Natural killer cell (primary cell): ENCODE measurements at regions of chr7 and their contacts with region 1.

Region 1: GRCh38 chr7:105808703-105809590 is 67.5 kb downstream of the ATXN7L1 start:
- DNase-seq: peak; percentile 62 to 85
- ATAC-seq: peak; percentile 81 to 94 (median 92)
- H3K4me3 ChIP-seq: no peak overlapping the region
- H3K4me3 Mint-ChIP-seq: peak overlapping the region; percentile 79
- H3K27ac ChIP-seq: peak overlapping the region; percentile 78
- H3K27ac Mint-ChIP-seq: peak overlapping the region; percentile 94 to 98
- H3K4me1 ChIP-seq: peaks cover 46% of the 10 kb centered on the region
- H3K4me1 Mint-ChIP-seq: peaks cover 62 to 76% of the 10 kb centered on the region in 2 donors
- H3K27me3 ChIP-seq: no peaks in the 10 kb centered on the region
- H3K27me3 Mint-ChIP-seq: no peaks in the 10 kb centered on the region
- CTCF ChIP-seq: no peak

Region 2: GRCh38 chr7:105678811-105679495 is 130.0 kb before region 1 on chr7:
- intact Hi-C with region 1: loop called (anchors 10 kb)
- DNase-seq: peak in 1 of 2 donors; percentile 44
- ATAC-seq: peak in 1 of 3 donors; percentile 37
- H3K4me3 ChIP-seq: peak overlapping the region; percentile 29
- H3K4me3 Mint-ChIP-seq: peak overlapping the region; percentile 72
- H3K27ac ChIP-seq: peak overlapping the region; percentile 66
- H3K27ac Mint-ChIP-seq: peak overlapping the region; percentile 84 to 88
- H3K4me1 ChIP-seq: peaks cover 40% of the 10 kb centered on the region
- H3K4me1 Mint-ChIP-seq: peaks cover 45 to 55% of the 10 kb centered on the region in 2 donors
- H3K27me3 ChIP-seq: no peaks in the 10 kb centered on the region
- H3K27me3 Mint-ChIP-seq: no peaks in the 10 kb centered on the region
- CTCF ChIP-seq: no peak

Region 3: GRCh38 chr7:105691733-105692564 is 117.0 kb before region 1 on chr7:
- intact Hi-C with region 1: loop called (anchors 5 kb)
- DNase-seq: peak; percentile 57 to 91
- ATAC-seq: peak; percentile 81 to 87 (median 84)
- H3K4me3 ChIP-seq: peak overlapping the region; percentile 64
- H3K4me3 Mint-ChIP-seq: peak overlapping the region; percentile 100
- H3K27ac ChIP-seq: peak overlapping the region; percentile 81
- H3K27ac Mint-ChIP-seq: peak overlapping the region; percentile 89 to 95
- H3K4me1 ChIP-seq: peaks cover 30% of the 10 kb centered on the region
- H3K4me1 Mint-ChIP-seq: peaks cover 27 to 33% of the 10 kb centered on the region in 2 donors
- H3K27me3 ChIP-seq: no peaks in the 10 kb centered on the region
- H3K27me3 Mint-ChIP-seq: peaks cover 0 to 2% of the 10 kb centered on the region in 2 donors
- CTCF ChIP-seq: no peak

Region 4: GRCh38 chr7:105826143-105826542 is 17.2 kb after region 1 on chr7:
- intact Hi-C with region 1: no loop called
- DNase-seq: no peak
- ATAC-seq: no peak
- H3K4me3 ChIP-seq: no peak overlapping the region
- H3K4me3 Mint-ChIP-seq: no peak overlapping the region
- H3K27ac ChIP-seq: no peak overlapping the region
- H3K27ac Mint-ChIP-seq: no peak overlapping the region
- H3K4me1 ChIP-seq: no peaks in the 10 kb centered on the region
- H3K4me1 Mint-ChIP-seq: peaks cover 38 to 43% of the 10 kb centered on the region in 2 donors
- H3K27me3 ChIP-seq: no peaks in the 10 kb centered on the region
- H3K27me3 Mint-ChIP-seq: no peaks in the 10 kb centered on the region
- CTCF ChIP-seq: no peak

Region 5: DNA sequence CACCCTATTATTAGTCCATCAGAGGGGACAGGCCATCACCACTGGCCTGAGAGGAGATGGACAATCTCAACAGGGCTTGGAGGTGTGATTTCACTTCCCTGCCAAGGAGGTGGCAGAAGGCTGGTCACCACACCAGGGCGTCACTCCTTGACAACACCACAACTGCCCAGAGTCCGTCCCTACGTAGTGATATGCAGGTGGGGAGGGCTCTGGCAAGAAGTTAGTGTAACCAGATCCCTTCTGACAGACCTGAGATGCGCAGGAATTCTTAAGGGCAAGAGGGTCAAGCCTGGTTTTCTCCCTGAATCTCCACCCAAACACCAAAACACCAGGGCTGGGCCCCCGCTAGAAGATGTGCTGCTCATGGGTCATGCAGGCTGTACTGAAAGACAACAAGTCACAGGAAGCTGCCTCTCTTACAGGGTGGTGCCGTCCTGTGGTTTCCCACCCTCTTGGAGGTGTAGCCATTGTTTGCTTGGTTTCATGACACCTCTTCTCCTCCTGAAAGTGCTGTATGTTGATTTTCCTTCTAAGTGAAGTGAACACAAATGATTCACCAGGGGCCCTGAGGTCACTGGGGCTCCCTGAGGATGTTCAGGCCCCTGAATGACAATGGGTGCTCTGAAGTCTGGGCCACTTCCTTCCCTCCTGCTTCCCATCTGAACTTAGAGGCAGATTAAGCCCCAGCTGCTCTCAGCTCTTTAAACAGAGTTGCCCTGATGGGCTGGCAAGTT is 40.3 kb after region 1 on chr7:
- intact Hi-C with region 1: loop called (anchors 1 kb)
- DNase-seq: peak; percentile 74 to 82
- ATAC-seq: peak; percentile 89 to 97 (median 94)
- H3K4me3 ChIP-seq: no peak overlapping the region
- H3K4me3 Mint-ChIP-seq: peak overlapping the region; percentile 88
- H3K27ac ChIP-seq: peak overlapping the region; percentile 86
- H3K27ac Mint-ChIP-seq: peak overlapping the region; percentile 96 to 97
- H3K4me1 ChIP-seq: peaks cover 58% of the 10 kb centered on the region
- H3K4me1 Mint-ChIP-seq: peaks cover 80 to 84% of the 10 kb centered on the region in 2 donors
- H3K27me3 ChIP-seq: no peaks in the 10 kb centered on the region
- H3K27me3 Mint-ChIP-seq: no peaks in the 10 kb centered on the region
- CTCF ChIP-seq: no peak

Region 6: DNA sequence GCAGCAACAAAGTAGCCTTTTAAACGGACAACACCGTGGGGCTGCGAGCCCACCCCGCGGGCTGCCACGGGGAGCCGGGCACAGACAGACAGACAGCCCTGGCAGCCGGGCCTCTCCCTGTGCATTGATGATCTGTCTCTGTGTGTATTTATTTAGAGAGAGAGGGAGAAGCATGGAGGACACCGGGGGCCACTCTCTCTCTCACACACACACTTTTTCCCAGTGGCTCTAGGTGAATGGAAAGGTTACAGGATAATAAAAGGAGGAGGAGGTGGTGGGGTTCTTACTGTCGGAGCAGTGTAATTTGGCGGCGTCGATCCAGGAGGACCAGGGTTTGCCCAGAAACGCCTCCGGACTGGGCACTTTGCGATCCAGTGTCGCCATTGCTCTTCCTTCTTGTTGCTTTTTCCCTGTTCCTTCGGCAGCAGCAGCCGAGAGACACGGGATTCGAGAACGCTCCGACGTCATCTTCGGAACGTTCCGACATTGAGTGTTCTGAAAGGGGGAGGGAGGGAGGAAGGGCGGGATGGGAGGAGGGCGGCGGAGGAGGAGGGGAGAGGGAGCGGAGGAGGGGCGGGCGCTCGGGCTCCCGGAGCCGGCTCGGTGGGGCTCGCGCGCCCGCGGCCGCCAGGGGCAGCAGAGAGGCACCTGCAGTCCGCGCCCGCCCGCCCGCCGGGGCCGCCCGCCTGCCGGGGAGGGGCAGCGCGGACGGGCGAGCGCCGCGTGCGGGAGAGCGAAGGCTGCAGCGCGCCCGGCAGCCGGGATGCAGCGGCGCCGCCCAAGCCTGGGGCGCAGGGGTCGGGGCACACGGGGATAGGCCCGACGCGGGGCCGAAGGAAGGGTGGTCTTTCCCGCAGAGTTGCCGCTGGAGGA is 67.4 kb after region 1 on chr7 and contains the start of gene ATXN7L1:
- intact Hi-C with region 1: loop called (anchors 1 kb)
- DNase-seq: peak; percentile 90 to 95
- ATAC-seq: peak; percentile 97 to 99 (median 99)
- H3K4me3 ChIP-seq: peak within 1 kb of the TSS; percentile 81
- H3K4me3 Mint-ChIP-seq: peak within 1 kb of the TSS; percentile 98
- H3K27ac ChIP-seq: peak within 1 kb of the TSS; percentile 56
- H3K27ac Mint-ChIP-seq: peak within 1 kb of the TSS; percentile 85 to 96
- H3K4me1 ChIP-seq: peaks cover 31% of the 10 kb centered on the region
- H3K4me1 Mint-ChIP-seq: peaks cover 60 to 61% of the 10 kb centered on the region in 2 donors
- H3K27me3 ChIP-seq: no peaks in the 10 kb centered on the region
- H3K27me3 Mint-ChIP-seq: no peaks in the 10 kb centered on the region
- CTCF ChIP-seq: peak; percentile 32
- total RNA-seq, gene ATXN7L1: 37.5 to 48.6 (median 47.9) TPM

Region 7: DNA sequence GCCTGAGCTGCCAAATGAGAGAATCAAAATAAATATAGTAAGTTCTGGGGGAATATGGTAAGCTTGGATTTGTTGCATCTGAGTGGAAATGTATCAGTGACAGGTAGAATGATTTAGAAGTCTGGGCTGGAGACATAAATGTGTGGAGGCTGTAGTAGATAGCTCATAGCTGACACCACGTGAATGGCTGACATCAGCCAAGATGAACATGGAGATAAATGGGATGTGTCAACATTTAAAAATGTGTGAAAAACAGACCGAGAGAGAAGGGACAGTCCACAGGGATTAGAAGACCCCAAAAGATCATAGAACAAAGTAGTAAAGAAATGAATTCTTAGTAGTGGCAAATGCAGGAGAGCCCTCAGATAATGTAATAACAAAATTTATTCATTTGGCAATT is 434.9 kb after region 1 on chr7:
- intact Hi-C with region 1: no loop called
- DNase-seq: no peak
- ATAC-seq: no peak
- H3K4me3 ChIP-seq: no peak overlapping the region
- H3K4me3 Mint-ChIP-seq: no peak overlapping the region
- H3K27ac ChIP-seq: no peak overlapping the region
- H3K27ac Mint-ChIP-seq: no peak overlapping the region
- H3K4me1 ChIP-seq: no peaks in the 10 kb centered on the region
- H3K4me1 Mint-ChIP-seq: no peaks in the 10 kb centered on the region
- H3K27me3 ChIP-seq: no peaks in the 10 kb centered on the region
- H3K27me3 Mint-ChIP-seq: peaks cover 0 to 8% of the 10 kb centered on the region in 2 donors
- CTCF ChIP-seq: no peak